ENCODE measurements at regions of chr13 and their contacts with region 1.

Region 1: DNA sequence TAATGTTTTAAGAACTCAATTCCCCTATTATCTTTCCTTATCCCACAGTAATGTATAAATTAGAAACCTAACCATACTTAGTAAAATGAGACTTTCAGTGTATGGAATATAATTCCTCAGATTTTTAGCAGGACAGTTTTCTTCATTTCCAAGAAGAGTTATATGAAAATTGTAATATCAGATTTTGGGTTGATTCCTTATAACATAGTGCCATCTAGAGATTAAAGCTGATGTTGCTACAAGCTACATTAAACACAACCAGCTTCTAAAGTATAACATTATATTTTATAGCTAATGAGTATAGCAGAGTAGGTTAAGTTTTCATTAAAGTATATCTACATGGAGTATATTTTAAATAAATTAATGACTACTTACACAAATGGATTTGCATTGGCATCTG is 99.7 kb upstream of the MIR17HG start:
- DNase-seq: peak; percentile 6
- H3K4me3 Mint-ChIP-seq: no peak overlapping the region
- H3K27ac Mint-ChIP-seq: no peak overlapping the region
- H3K4me1 Mint-ChIP-seq: no peaks in the 10 kb centered on the region
- H3K27me3 Mint-ChIP-seq: peaks cover 78% of the 10 kb centered on the region
- CTCF ChIP-seq: peak; percentile 19

Region 2: DNA sequence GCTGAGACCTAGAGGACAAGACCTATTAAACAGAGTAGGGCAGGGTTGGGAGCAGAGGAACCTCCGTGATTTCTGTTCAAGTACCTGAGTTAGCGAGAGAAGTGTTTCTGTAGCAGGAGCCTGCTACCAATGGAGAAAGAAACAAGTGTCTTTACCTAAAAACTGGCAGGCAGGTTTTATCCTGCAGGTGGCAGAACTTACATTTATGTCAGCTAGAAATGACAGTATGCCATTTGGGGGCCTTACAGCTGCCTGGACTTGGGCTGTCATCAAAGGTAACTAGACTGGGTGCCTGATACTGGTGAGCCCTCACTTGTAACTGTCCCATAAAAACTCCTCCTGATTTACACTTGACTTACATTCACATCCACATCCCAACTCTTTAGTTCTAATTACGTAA is 85.6 kb before region 1 on chr13:
- CTCF ChIA-PET with region 1: interaction called, 3 read pairs
- POLR2A ChIA-PET with region 1: no interaction called
- intact Hi-C with region 1: loop called (anchors 5 kb)
- DNase-seq: no peak
- H3K4me3 Mint-ChIP-seq: no peak overlapping the region
- H3K27ac Mint-ChIP-seq: no peak overlapping the region
- H3K4me1 Mint-ChIP-seq: no peaks in the 10 kb centered on the region
- H3K27me3 Mint-ChIP-seq: peaks cover 95% of the 10 kb centered on the region
- CTCF ChIP-seq: no peak